Endothelial cell of umbilical vein (primary cell): ENCODE measurements at regions of chr19 and their contacts with region 1.

Region 1: GRCh38 chr19:2475702-2476450 is at the start of gene GADD45B:
- DNase-seq: peak; percentile 98
- H3K4me3 ChIP-seq: peak within 1 kb of the TSS; percentile 83 to 89 (median 89)
- H3K27ac ChIP-seq: peak within 1 kb of the TSS; percentile 90
- H3K4me1 ChIP-seq: peaks cover 19% of the 10 kb centered on the region
- H3K27me3 ChIP-seq: no peaks in the 10 kb centered on the region
- CTCF ChIP-seq: no peak
- POLR2A ChIP-seq: peak; percentile 100
- total RNA-seq, gene GADD45B: 61.3 and 75.9 TPM in 2 replicates

Region 2: DNA sequence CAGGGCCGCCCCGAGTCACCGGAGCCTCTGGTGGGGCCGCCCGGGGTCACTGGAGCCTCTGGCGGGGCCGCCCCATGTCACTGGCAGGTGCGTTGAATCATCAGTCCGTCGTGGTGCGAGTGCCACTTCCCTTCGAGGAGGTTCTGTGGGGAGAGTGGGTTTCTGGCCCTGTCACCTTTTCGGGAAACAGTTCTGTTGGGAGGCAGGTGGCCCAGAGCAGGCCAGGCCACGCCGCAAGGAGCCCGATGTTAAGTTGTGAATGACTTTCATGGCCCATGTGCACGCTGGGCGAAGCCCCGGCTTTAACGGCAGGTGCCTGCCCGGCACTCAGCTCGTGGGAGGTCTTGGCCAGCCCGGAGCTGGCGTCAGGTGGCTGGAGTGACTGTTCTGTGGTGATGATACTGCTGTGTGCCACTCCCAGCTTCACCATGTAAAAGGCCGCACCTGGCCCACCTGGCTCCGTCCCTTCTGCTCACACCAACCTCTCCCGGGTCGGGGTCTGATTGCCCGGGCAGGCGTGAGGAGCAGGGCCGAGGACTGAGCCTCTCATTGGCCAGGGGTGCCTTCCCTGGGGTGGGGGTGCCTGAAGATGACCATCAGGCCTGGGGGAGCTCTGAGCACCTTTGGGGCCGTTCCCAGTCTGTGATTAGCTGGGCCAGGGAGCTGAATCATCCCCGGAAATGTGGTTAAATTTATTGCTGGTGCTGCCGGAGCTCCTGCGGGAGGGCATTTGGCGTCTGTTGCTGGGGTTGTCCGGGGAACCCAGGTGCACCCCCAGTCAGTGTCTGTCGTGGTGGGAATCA is 505.7 kb before region 1 on chr19:
- CTCF ChIA-PET with region 1: no interaction called
- POLR2A ChIA-PET with region 1: no interaction called
- dilution Hi-C with region 1: no loop called
- intact Hi-C with region 1: no loop called
- DNase-seq: no peak
- H3K4me3 ChIP-seq: no peak overlapping the region
- H3K27ac ChIP-seq: no peak overlapping the region
- H3K4me1 ChIP-seq: no peaks in the 10 kb centered on the region
- H3K27me3 ChIP-seq: no peaks in the 10 kb centered on the region
- CTCF ChIP-seq: no peak
- POLR2A ChIP-seq: no peak

Region 3: DNA sequence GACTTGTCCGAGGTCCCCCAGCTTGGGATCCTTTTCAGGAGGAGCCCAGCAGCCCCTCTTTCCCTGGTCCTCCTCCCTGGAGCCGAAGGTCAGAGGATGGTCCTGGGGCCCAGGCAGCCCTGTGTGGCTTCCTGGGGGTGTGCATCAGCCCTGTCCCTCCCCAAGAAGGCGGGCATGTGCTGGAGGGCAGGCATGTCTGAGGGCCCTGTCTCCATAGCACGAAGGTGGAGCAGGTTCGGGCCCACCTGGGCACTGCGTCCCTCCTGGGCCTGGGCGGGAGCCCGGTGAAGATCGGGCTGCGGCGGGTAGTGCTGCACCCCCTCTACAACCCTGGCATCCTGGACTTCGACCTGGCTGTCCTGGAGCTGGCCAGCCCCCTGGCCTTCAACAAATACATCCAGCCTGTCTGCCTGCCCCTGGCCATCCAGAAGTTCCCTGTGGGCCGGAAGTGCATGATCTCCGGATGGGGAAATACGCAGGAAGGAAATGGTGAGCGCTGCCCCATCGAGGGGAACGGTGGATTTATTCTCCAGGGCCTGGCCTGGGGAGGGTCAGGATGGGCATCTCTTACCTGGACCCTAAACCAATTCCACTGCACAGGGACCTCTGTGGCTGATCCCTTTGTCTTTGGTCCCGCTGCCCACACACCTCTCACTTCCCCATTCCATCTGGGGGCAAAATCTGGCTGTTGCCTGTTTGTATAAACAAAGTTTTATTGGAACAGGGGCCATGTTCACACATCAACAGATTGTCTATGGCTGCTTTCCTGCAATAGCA is 59.4 kb before region 1 on chr19:
- CTCF ChIA-PET with region 1: no interaction called
- POLR2A ChIA-PET with region 1: no interaction called
- dilution Hi-C with region 1: no loop called
- intact Hi-C with region 1: no loop called
- DNase-seq: no peak
- H3K4me3 ChIP-seq: no peak overlapping the region
- H3K27ac ChIP-seq: no peak overlapping the region
- H3K4me1 ChIP-seq: peaks cover 2% of the 10 kb centered on the region
- H3K27me3 ChIP-seq: no peaks in the 10 kb centered on the region
- CTCF ChIP-seq: no peak
- POLR2A ChIP-seq: no peak

Region 4: GRCh38 chr19:2427429-2428320 is 48.2 kb before region 1 on chr19 and contains the start of gene TIMM13:
- CTCF ChIA-PET with region 1: interaction called, 3 read pairs
- POLR2A ChIA-PET with region 1: interaction called, 16 read pairs
- dilution Hi-C with region 1: no loop called
- intact Hi-C with region 1: no loop called
- DNase-seq: peak; percentile 98
- H3K4me3 ChIP-seq: peak within 1 kb of the TSS; percentile 63 to 75 (median 63)
- H3K27ac ChIP-seq: peak within 1 kb of the TSS; percentile 84
- H3K4me1 ChIP-seq: peaks cover 26% of the 10 kb centered on the region
- H3K27me3 ChIP-seq: no peaks in the 10 kb centered on the region
- CTCF ChIP-seq: no peak
- POLR2A ChIP-seq: peak; percentile 49
- total RNA-seq, gene TIMM13: 148 and 160 TPM in 2 replicates

Region 5: GRCh38 chr19:2488942-2489731 is 13.3 kb after region 1 on chr19:
- CTCF ChIA-PET with region 1: interaction called, 3 read pairs
- POLR2A ChIA-PET with region 1: interaction called, 11 read pairs
- dilution Hi-C with region 1: no loop called
- intact Hi-C with region 1: loop called (anchors 1 kb)
- DNase-seq: peak; percentile 34
- H3K4me3 ChIP-seq: peak overlapping the region; percentile 14 to 25 (median 15)
- H3K27ac ChIP-seq: peak overlapping the region; percentile 19
- H3K4me1 ChIP-seq: peaks cover 18% of the 10 kb centered on the region
- H3K27me3 ChIP-seq: no peaks in the 10 kb centered on the region
- CTCF ChIP-seq: no peak
- POLR2A ChIP-seq: no peak

Region 6: GRCh38 chr19:2519482-2519881 is 43.6 kb after region 1 on chr19:
- CTCF ChIA-PET with region 1: interaction called, 3 read pairs
- POLR2A ChIA-PET with region 1: interaction called, 10 read pairs
- dilution Hi-C with region 1: no loop called
- intact Hi-C with region 1: no loop called
- DNase-seq: no peak
- H3K4me3 ChIP-seq: no peak overlapping the region
- H3K27ac ChIP-seq: no peak overlapping the region
- H3K4me1 ChIP-seq: no peaks in the 10 kb centered on the region
- H3K27me3 ChIP-seq: no peaks in the 10 kb centered on the region
- CTCF ChIP-seq: no peak
- POLR2A ChIP-seq: no peak

Region 7: GRCh38 chr19:2543463-2544442 is 67.9 kb after region 1 on chr19:
- CTCF ChIA-PET with region 1: interaction called, 59 read pairs
- POLR2A ChIA-PET with region 1: interaction called, 253 read pairs
- dilution Hi-C with region 1: no loop called
- intact Hi-C with region 1: loop called (anchors 1 kb)
- DNase-seq: peak; percentile 97
- H3K4me3 ChIP-seq: peak overlapping the region in 1 of 3 experiments; percentile 20
- H3K27ac ChIP-seq: peak overlapping the region; percentile 99
- H3K4me1 ChIP-seq: peaks cover 58% of the 10 kb centered on the region
- H3K27me3 ChIP-seq: no peaks in the 10 kb centered on the region
- CTCF ChIP-seq: peak; percentile 22 to 46
- POLR2A ChIP-seq: peak; percentile 55

Region 8: GRCh38 chr19:2588081-2588777 is 112.4 kb after region 1 on chr19:
- CTCF ChIA-PET with region 1: no interaction called
- POLR2A ChIA-PET with region 1: interaction called, 14 read pairs
- dilution Hi-C with region 1: no loop called
- intact Hi-C with region 1: no loop called
- DNase-seq: peak; percentile 23
- H3K4me3 ChIP-seq: no peak overlapping the region
- H3K27ac ChIP-seq: no peak overlapping the region
- H3K4me1 ChIP-seq: peaks cover 3% of the 10 kb centered on the region
- H3K27me3 ChIP-seq: peaks cover 4 to 14% of the 10 kb centered on the region in 2 experiments
- CTCF ChIP-seq: no peak
- POLR2A ChIP-seq: no peak

Region 9: DNA sequence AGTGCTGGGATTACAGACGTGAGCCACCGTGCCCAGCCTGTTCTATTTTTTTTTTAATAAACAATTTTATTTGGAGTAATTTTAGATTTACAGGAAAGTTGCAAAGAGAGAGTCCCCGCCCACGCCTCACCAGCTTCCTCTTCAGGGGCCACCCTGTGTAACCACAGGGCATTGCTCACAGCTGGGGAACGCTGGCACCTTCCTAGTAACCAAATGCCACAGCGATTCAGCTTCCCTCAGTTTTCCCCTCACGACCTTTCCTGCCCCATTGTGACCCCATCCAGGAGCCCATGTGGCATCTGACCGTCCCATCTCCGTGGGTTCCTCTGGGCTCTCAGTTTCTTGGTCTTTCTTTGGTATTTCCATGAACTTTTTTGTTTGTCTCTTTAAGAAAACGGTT is 142.7 kb after region 1 on chr19:
- CTCF ChIA-PET with region 1: interaction called, 16 read pairs
- POLR2A ChIA-PET with region 1: interaction called, 29 read pairs
- dilution Hi-C with region 1: no loop called
- intact Hi-C with region 1: no loop called
- DNase-seq: peak; percentile 29
- H3K4me3 ChIP-seq: no peak overlapping the region
- H3K27ac ChIP-seq: peak overlapping the region; percentile 81
- H3K4me1 ChIP-seq: peaks cover 27% of the 10 kb centered on the region
- H3K27me3 ChIP-seq: no peaks in the 10 kb centered on the region
- CTCF ChIP-seq: no peak
- POLR2A ChIP-seq: no peak